ENCODE measurements at regions of chr10 and their contacts with region 1.

Region 1: GRCh38 chr10:133241501-133242205 is 4.0 kb downstream of the VENTX start:
- DNase-seq: peak in 2 of 3 donors; percentile 73 to 78
- H3K4me3 ChIP-seq: peak overlapping the region in 6 of 7 experiments; percentile 20 to 83 (median 61)
- H3K27ac ChIP-seq: no peak overlapping the region
- H3K4me1 ChIP-seq: peaks cover 0 to 42% (median 37%) of the 10 kb centered on the region in 4 experiments
- H3K27me3 ChIP-seq: peaks cover 0 to 26% (median 6%) of the 10 kb centered on the region in 5 experiments

Region 2: DNA sequence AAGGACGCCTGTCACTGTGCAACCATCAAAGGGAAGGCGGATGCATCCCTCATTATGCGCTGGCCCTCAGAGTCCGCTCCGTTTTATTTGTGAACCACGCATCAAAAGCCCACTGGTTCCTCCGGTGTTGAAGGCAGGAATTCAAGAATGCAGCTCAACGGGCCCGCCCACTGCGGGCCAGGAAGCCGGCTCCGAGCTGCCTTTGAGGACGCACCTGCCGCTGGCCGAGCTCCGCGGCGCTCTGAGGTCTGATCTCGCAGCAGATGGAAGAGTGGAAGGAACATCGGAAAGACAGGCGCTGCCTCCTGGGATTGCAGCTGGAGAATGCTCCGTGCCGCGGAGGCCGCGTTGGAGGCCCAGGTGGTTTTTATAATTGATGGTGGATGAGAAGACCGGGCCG is 210.9 kb before region 1 on chr10:
- CTCF ChIA-PET with region 1: no interaction called
- POLR2A ChIA-PET with region 1: no interaction called
- DNase-seq: no peak
- H3K4me3 ChIP-seq: no peak overlapping the region
- H3K27ac ChIP-seq: no peak overlapping the region
- H3K4me1 ChIP-seq: peaks cover 0 to 6% (median 1%) of the 10 kb centered on the region in 4 experiments
- H3K27me3 ChIP-seq: peaks cover 0 to 67% (median 19%) of the 10 kb centered on the region in 5 experiments

Region 3: DNA sequence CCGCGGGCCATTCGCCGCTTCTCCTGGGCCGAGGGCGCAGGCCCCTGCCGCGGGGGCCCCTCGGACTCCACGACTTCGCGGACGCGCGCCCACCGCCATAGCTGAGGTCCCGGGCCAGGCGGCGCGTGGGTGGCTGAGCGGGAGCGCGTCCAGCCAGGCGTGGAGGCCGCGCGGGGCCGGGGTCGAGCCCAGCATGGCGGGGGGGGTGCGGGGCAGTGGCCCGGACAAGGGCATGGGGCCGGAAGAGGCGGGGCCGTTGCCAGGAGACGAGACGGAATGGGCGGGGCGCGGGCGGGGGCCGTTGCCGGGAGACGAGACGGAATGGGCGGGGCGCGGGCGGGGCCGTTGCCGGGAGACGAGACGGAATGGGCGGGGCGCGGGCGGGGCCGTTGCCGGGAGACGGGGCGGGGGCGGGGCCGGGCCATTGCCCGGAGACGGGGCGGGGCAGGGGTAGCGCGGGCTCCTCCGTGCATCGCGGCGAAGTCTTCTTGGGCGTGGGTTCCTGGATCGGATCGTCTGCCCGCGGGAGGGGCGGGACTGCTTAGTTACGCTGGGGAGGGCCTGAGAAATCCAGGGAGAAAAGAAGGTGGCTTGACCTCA is 20.2 kb after region 1 on chr10:
- CTCF ChIA-PET with region 1: interaction called, 44 read pairs
- POLR2A ChIA-PET with region 1: interaction called, 11 read pairs
- DNase-seq: peak in 2 of 3 donors; percentile 64 to 70
- H3K4me3 ChIP-seq: peak overlapping the region in 6 of 7 experiments; percentile 19 to 74 (median 59)
- H3K27ac ChIP-seq: no peak overlapping the region
- H3K4me1 ChIP-seq: peaks cover 5 to 64% (median 61%) of the 10 kb centered on the region in 4 experiments
- H3K27me3 ChIP-seq: no peaks in the 10 kb centered on the region

Region 4: GRCh38 chr10:133318494-133319127 is 77.0 kb after region 1 on chr10:
- CTCF ChIA-PET with region 1: interaction called, 10 read pairs
- POLR2A ChIA-PET with region 1: no interaction called
- DNase-seq: peak; percentile 69 to 74 (median 73)
- H3K4me3 ChIP-seq: peak overlapping the region in 6 of 7 experiments; percentile 19 to 73 (median 52)
- H3K27ac ChIP-seq: no peak overlapping the region
- H3K4me1 ChIP-seq: peaks cover 0 to 7% (median 1%) of the 10 kb centered on the region in 4 experiments
- H3K27me3 ChIP-seq: peaks cover 0 to 12% (median 2%) of the 10 kb centered on the region in 5 experiments

Region 5: DNA sequence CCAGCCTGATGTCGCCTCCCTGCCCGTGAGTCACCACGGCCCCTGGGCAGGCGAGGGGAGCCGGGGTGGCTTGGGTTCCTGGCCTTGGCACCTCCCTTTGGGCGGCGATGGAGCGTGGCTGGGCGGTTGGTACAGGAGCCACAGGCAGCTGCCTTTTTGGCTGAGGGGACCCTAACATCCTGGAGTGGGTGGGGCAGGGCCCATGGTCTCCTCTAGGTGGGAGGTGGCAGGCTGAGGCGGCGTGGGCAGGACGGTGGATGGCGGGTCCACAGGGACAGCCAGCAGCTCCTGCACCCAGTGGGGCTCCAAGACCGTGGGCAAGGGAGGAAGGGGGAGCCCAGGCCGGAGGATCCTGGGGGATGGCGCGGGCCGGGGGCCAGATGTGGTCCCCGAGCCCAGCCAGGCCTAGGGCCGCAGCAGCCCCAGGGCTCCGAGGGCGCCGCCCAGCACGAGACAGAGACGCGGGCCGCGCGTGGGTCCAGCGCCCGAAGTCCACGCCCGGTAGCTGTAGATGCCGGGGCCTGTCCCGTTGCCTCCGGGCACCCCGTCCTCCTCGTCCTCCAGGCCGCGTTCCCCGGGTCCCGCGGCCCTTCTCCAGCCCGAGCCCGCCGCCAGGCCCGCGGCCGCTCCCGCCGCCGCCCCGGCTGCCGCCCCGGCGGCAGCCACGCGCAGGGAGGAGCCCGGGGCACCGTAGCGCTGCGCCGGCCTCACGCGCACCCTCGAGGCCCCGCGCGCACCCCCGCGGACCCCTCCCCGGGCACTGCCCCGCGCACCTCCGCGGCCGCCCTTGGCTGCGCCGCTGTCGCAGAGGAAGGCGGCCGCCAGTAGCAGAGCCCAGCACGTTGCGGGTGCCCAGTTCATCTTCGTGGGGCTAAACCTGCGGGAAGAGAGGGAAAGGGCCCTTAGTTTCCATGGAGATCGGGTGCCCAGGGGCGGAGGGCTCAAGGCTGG is 181.4 kb after region 1 on chr10:
- CTCF ChIA-PET with region 1: no interaction called
- POLR2A ChIA-PET with region 1: no interaction called
- DNase-seq: peak in 2 of 3 donors; percentile 26 to 35
- H3K4me3 ChIP-seq: no peak overlapping the region
- H3K27ac ChIP-seq: no peak overlapping the region
- H3K4me1 ChIP-seq: peaks cover 0 to 8% (median 3%) of the 10 kb centered on the region in 4 experiments
- H3K27me3 ChIP-seq: peaks cover 0 to 24% (median 9%) of the 10 kb centered on the region in 5 experiments